AG04449 (cell line): ENCODE measurements at regions of chr19 and their contacts with region 1.

Region 1: DNA sequence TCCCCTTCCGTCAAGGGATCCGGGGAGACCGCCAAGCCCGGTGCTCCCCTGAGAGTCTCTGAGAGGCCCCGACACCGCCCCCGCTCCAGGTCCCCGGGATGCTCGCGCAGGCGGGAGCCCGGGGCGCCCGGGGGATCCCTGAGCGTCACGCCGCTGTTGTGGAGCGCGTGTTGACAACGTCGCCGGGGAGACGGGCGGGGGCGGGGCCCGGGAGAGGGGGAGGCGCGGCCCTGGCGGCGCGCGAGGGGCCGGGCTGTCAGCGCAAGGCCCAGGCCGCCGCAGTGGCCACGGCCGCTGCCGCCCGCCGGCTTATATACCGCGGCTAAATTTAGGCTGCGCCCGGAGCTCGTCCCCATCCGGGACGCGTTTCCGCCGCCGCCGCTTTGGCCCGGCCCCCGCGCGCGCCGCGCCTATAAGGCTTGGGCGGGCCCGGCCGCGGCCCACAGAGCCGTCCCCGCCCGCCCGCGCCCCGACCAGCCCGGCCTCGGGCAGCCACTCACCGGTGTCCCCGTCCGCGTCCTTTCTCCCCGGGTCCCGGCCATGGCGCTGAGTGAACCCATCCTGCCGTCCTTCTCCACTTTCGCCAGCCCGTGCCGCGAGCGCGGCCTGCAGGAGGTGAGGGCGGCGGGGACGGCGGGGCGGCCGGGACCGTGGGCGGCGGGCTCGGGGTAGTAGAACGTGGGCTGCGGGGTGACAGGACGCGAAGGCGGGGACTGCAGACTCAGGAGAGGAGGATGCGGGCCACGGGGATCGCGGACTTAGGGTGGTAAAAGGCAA is at the start of gene KLF2:
- DNase-seq: no peak
- H3K4me3 ChIP-seq: peak within 1 kb of the TSS; percentile 88
- CTCF ChIP-seq: no peak

Region 2: GRCh38 chr19:16283210-16284061 is 41.1 kb before region 1 on chr19:
- CTCF ChIA-PET with region 1: no interaction called
- POLR2A ChIA-PET with region 1: interaction called, 13 read pairs
- DNase-seq: no peak
- H3K4me3 ChIP-seq: no peak overlapping the region
- CTCF ChIP-seq: no peak

Region 3: GRCh38 chr19:16293118-16294091 is 31.2 kb before region 1 on chr19:
- CTCF ChIA-PET with region 1: no interaction called
- POLR2A ChIA-PET with region 1: interaction called, 19 read pairs
- DNase-seq: peak; percentile 77
- H3K4me3 ChIP-seq: peak overlapping the region; percentile 15
- CTCF ChIP-seq: no peak

Region 4: GRCh38 chr19:16338470-16339360 is 14.1 kb after region 1 on chr19:
- CTCF ChIA-PET with region 1: interaction called, 10 read pairs
- POLR2A ChIA-PET with region 1: interaction called, 48 read pairs
- DNase-seq: no peak
- H3K4me3 ChIP-seq: no peak overlapping the region; the same call in 1 of the 2 replicates
- CTCF ChIP-seq: peak; percentile 11